ENCODE measurements at regions of chr2 and their contacts with region 1.

Region 1: GRCh38 chr2:145752091-145752806 is 1232.3 kb upstream of the ZEB2 start:
- DNase-seq: peak; percentile 78
- ATAC-seq: peak; percentile 73
- H3K4me3 ChIP-seq: no peak overlapping the region; the same call in 1 of the 2 replicates
- H3K27ac ChIP-seq: peak overlapping the region; percentile 71
- H3K4me1 ChIP-seq: peaks cover 30% of the 10 kb centered on the region
- H3K27me3 ChIP-seq: no peaks in the 10 kb centered on the region
- CTCF ChIP-seq: peak; percentile 86

Region 2: GRCh38 chr2:144890828-144891227 is 861.4 kb before region 1 on chr2:
- CTCF ChIA-PET with region 1: no interaction called
- POLR2A ChIA-PET with region 1: no interaction called
- intact Hi-C with region 1: loop called (anchors 5 kb)
- DNase-seq: peak; percentile 54
- ATAC-seq: peak; percentile 57
- H3K4me3 ChIP-seq: no peak overlapping the region
- H3K27ac ChIP-seq: no peak overlapping the region
- H3K4me1 ChIP-seq: peaks cover 6% of the 10 kb centered on the region; the same call in 1 of the 2 replicates
- H3K27me3 ChIP-seq: no peaks in the 10 kb centered on the region
- CTCF ChIP-seq: peak; percentile 47

Region 3: GRCh38 chr2:145484443-145485097 is 267.7 kb before region 1 on chr2:
- CTCF ChIA-PET with region 1: interaction called, 5 read pairs
- POLR2A ChIA-PET with region 1: no interaction called
- intact Hi-C with region 1: loop called (anchors 1 kb)
- DNase-seq: peak; percentile 91
- ATAC-seq: peak; percentile 98
- H3K4me3 ChIP-seq: no peak overlapping the region
- H3K27ac ChIP-seq: peak overlapping the region; percentile 71
- H3K4me1 ChIP-seq: peaks cover 16% of the 10 kb centered on the region
- H3K27me3 ChIP-seq: no peaks in the 10 kb centered on the region
- CTCF ChIP-seq: peak; percentile 70

Region 4: GRCh38 chr2:145682546-145683157 is 69.6 kb before region 1 on chr2:
- CTCF ChIA-PET with region 1: no interaction called
- POLR2A ChIA-PET with region 1: interaction called, 11 read pairs
- intact Hi-C with region 1: loop called (anchors 5 kb)
- DNase-seq: peak; percentile 80
- ATAC-seq: peak; percentile 95
- H3K4me3 ChIP-seq: no peak overlapping the region
- H3K27ac ChIP-seq: peak overlapping the region; percentile 88
- H3K4me1 ChIP-seq: peaks cover 45% of the 10 kb centered on the region
- H3K27me3 ChIP-seq: no peaks in the 10 kb centered on the region
- CTCF ChIP-seq: no peak

Measured in PC-3 (cell line).